Testis (tissue), 5 donors: ENCODE measurements at regions of chr22 and their contacts with region 1.

Region 1: GRCh38 chr22:31084811-31085497 is 3.8 kb downstream of the SMTN start:
- DNase-seq: peak; percentile 93
- H3K4me3 ChIP-seq: peak overlapping the region; percentile 58 to 90
- H3K27ac ChIP-seq: peak overlapping the region; percentile 86 to 90
- H3K4me1 ChIP-seq: peaks cover 36% of the 10 kb centered on the region
- H3K27me3 ChIP-seq: no peaks in the 10 kb centered on the region
- CTCF ChIP-seq: peak; percentile 83 to 92 (median 83)
- POLR2A ChIP-seq: no peak

Region 2: DNA sequence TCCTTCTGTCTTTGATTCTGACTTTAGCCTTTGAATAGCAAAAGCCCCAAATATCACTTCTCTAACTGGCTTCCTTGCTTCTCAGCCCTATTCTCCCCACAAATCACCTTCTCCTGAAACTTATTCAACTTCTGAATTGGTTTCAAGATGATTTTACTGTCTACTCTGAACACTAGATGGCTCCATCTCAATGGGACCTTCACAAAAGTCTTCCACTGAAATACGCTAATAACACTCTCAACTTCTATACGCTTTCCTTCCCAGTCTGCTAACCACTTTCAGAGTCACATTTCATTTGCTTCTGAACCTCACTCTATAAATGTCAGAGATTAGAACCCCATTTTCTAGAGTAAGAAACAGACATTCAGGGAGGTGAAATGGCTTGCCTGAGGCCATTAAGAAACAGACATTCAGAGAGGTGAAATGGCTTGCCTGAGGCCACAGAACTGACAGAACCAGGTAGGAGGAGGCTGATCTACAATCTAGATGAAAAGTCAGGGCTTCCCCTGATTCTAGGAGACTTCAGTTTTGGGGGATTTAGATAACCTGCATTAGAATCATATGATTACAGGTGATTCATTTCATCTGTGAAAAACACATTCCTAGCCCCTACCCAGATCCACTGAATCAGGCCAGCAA is 137.0 kb before region 1 on chr22:
- intact Hi-C with region 1: loop called (anchors 5 kb)
- DNase-seq: no peak
- H3K4me3 ChIP-seq: no peak overlapping the region
- H3K27ac ChIP-seq: no peak overlapping the region
- H3K4me1 ChIP-seq: no peaks in the 10 kb centered on the region
- H3K27me3 ChIP-seq: no peaks in the 10 kb centered on the region
- CTCF ChIP-seq: peak; percentile 45 to 49 (median 48)
- POLR2A ChIP-seq: no peak

Region 3: GRCh38 chr22:30968924-30969539 is 115.9 kb before region 1 on chr22 and contains the start of gene TUG1:
- intact Hi-C with region 1: no loop called
- DNase-seq: peak; percentile 100
- H3K4me3 ChIP-seq: peak within 1 kb of the TSS; percentile 88 to 97
- H3K27ac ChIP-seq: peak within 1 kb of the TSS; percentile 97
- H3K4me1 ChIP-seq: peaks cover 10% of the 10 kb centered on the region
- H3K27me3 ChIP-seq: no peaks in the 10 kb centered on the region
- CTCF ChIP-seq: peak in 1 of 3 experiments; percentile 1
- POLR2A ChIP-seq: peak; percentile 82
- total RNA-seq, gene TUG1: 134 to 182 TPM

Region 4: DNA sequence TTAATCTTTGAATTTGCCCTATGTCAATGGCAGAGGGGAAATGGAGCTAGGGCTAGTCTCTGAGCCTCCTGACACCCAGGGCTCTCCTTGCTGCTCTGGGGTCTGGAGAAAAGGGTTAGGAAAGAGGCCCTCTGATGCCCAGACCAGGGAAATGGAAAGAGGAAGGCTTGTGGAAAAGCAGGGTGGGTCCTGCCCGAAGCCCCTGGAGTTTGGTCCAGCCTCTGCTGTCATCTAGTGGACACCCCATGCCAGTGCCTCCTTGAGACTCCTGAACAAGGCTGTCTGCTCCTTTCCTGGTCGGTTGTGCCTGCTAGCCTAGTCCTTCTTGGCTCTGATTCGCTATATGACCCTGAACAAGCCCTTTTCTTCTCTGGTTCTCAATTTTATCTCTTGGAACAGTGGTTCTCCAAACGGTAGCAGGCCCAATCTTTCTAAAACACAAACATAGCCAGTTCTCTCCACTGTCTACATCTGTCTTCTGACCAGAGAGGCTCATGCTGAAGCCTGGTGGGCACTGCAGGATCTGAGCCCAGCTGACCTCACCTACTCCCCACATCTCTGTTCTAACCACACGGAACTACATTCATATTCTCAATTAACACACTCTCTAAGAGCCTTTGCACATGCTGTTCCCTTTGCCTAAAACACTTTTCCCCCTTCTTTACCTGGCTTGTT is 64.1 kb after region 1 on chr22:
- intact Hi-C with region 1: loop called (anchors 10 kb)
- DNase-seq: peak; percentile 80
- H3K4me3 ChIP-seq: no peak overlapping the region
- H3K27ac ChIP-seq: no peak overlapping the region
- H3K4me1 ChIP-seq: no peaks in the 10 kb centered on the region
- H3K27me3 ChIP-seq: no peaks in the 10 kb centered on the region
- CTCF ChIP-seq: peak; percentile 69 to 82 (median 76)
- POLR2A ChIP-seq: no peak

Region 5: GRCh38 chr22:31160328-31160978 is 75.5 kb after region 1 on chr22:
- intact Hi-C with region 1: no loop called
- DNase-seq: peak; percentile 42
- H3K4me3 ChIP-seq: peak overlapping the region; percentile 94 to 95
- H3K27ac ChIP-seq: peak overlapping the region; percentile 90 to 92
- H3K4me1 ChIP-seq: peaks cover 14% of the 10 kb centered on the region
- H3K27me3 ChIP-seq: no peaks in the 10 kb centered on the region
- CTCF ChIP-seq: no peak
- POLR2A ChIP-seq: no peak

Region 6: DNA sequence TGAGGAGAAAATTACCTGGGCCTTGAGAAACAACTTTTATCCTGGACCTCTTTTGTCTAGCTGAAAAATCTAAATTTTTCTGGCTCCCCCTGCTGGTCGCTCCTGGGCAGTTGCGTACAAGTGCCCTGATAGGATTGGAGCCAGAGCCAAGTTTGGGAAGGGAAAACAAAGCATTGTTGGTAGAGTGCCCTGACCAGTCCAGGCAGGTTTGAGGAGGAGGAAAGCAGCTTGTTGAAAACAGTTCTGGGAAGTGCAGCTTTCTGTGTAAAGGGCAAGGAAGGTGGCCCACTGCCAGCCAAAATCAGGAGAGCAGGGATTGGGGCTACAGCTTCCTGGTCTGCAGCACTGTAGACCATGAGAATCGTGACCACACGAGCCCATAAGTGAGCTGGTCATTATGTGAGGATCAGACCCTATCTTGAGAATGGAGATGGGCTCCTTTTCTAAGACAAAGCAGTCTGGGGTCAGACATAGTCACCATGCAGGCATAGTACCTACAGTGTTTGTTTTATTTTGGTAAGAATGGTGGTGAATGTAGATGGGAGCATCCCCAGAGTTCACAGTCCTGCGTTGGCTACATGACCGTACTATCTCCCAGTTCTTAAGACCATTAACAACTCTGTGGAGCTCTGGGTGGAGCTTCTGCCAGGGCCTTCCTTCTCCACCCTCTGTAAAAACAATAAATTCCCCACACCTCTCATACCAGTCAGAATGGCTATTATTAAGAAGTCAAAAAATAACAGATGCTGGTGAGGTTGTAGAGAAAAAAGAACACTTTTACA is 228.6 kb after region 1 on chr22:
- intact Hi-C with region 1: no loop called
- DNase-seq: peak; percentile 85
- H3K4me3 ChIP-seq: no peak overlapping the region
- H3K27ac ChIP-seq: peak overlapping the region; percentile 62 to 73
- H3K4me1 ChIP-seq: peaks cover 5% of the 10 kb centered on the region
- H3K27me3 ChIP-seq: no peaks in the 10 kb centered on the region
- CTCF ChIP-seq: peak; percentile 71 to 87 (median 81)
- POLR2A ChIP-seq: no peak